Activated CD4-positive, alpha-beta T cell treated with anti-CD3 and anti-CD28 coated beads for 36 hours (primary cell): ENCODE measurements at regions of chr9 and their contacts with region 1.

Region 1: DNA sequence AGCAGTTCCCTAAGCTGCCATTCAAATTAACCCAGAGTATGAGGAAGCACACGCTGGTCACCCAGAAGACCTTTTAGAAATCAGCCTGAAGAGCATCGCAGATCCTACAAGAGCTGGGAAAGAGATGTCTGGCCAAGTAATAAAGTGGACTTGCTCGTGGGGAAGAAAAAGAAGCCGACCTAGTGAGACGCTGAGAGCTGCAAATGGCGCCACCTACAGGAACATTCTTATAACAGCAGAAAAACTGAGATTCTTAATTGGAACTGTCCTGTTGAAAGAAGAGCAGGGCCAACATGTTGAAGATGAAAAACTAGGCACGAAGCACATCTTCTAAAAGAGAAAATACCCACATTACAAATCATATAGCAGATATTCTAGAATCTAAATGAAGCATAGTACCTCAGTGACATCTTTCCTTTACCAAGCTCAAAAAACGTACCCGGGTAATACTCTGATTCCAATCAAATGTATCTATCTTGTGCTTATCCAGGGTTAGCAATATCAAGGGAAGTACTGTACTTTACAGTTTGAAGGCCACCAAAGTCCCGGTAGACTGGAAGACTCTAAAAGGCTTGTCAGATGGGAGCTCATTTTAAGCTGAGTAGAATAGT is 3.9 kb upstream of the GNAQ start:
- DNase-seq: peak; percentile 69
- ATAC-seq: peak; percentile 21
- H3K4me3 Mint-ChIP-seq: no peak overlapping the region
- H3K27ac Mint-ChIP-seq: no peak overlapping the region
- H3K4me1 Mint-ChIP-seq: peaks cover 30% of the 10 kb centered on the region
- H3K27me3 Mint-ChIP-seq: no peaks in the 10 kb centered on the region

Region 2: GRCh38 chr9:77177161-77177893 is 858.2 kb before region 1 on chr9 and contains the start of gene VPS13A:
- CTCF ChIA-PET with region 1: no interaction called
- POLR2A ChIA-PET with region 1: no interaction called
- intact Hi-C with region 1: loop called (anchors 1 to 5 kb)
- DNase-seq: peak; percentile 98
- ATAC-seq: peak; percentile 92
- H3K4me3 Mint-ChIP-seq: peak within 1 kb of the TSS; percentile 97
- H3K27ac Mint-ChIP-seq: peak within 1 kb of the TSS; percentile 93
- H3K4me1 Mint-ChIP-seq: peaks cover 23% of the 10 kb centered on the region
- H3K27me3 Mint-ChIP-seq: no peaks in the 10 kb centered on the region
- total RNA-seq, gene VPS13A: 33.3 to 33.6 TPM

Region 3: GRCh38 chr9:77648234-77649120 is 387.0 kb before region 1 on chr9 and contains the start of gene GNA14:
- CTCF ChIA-PET with region 1: no interaction called
- POLR2A ChIA-PET with region 1: no interaction called
- intact Hi-C with region 1: loop called in 1 of 2 experiments (anchors 5 kb)
- DNase-seq: peak; percentile 46
- ATAC-seq: peak; percentile 23
- H3K4me3 Mint-ChIP-seq: peak within 1 kb of the TSS; percentile 65
- H3K27ac Mint-ChIP-seq: no peak within 1 kb of the TSS
- H3K4me1 Mint-ChIP-seq: peaks cover 11% of the 10 kb centered on the region
- H3K27me3 Mint-ChIP-seq: peaks cover 38% of the 10 kb centered on the region
- total RNA-seq, gene GNA14: 0.11 to 0.54 TPM

Region 4: DNA sequence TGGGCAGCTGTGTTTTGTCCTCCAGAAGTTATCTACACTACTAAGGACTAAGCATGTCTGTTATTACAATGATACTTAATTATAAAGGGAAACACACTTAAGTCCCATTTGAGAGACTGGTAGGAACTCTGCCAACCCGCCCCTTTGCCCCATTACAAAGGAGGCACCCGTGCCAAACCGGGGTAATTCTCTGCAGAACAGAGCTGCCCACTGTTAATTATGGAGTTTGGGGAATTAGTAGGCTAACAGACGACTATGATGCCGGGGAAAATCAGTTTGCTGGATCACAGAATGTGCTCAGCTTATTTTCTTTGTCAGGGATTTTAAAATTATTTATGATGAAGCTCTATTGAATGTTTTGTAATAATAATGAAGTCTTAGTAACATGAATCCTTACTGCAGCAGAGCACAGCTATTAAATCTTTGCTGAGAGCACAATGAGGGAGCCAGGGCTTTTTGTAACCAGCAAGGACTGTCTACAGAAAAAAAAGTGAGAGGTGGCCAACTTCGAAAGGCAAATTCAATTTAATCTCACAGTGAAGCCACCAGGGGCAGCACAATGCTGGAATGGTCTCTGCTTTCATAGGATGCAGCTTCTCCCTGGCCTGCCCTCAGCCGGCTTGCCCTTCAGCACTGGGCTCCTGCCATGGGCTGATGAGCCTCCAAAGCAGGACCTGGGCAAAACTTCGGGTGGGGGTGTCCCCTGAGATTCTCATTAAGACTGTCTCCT is 138.4 kb before region 1 on chr9:
- CTCF ChIA-PET with region 1: interaction called, 13 read pairs
- POLR2A ChIA-PET with region 1: no interaction called
- intact Hi-C with region 1: loop called in 1 of 2 experiments (anchors 5 kb)
- DNase-seq: no peak
- ATAC-seq: no peak
- H3K4me3 Mint-ChIP-seq: no peak overlapping the region
- H3K27ac Mint-ChIP-seq: no peak overlapping the region
- H3K4me1 Mint-ChIP-seq: peaks cover 36% of the 10 kb centered on the region
- H3K27me3 Mint-ChIP-seq: no peaks in the 10 kb centered on the region

Region 5: DNA sequence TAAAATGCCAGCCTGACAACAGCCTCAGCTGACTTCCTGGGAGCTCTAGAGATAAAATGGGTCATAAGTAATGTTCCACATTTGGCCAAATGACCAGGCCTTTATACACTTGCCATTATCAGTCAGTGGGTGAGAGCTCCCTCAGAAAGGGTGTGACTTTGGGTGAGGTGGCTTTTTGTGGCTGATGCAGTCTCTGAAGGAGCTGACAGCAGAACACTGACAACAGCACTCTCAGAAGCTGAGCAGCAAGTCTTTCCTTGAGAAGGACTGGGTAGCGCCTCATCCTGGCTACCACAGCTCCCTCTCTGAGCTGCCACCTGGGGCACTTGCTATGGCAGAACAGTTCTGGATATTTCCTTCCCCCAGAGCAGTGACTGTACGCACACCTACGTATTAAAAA is 18.1 kb after region 1 on chr9:
- CTCF ChIA-PET with region 1: interaction called, 29 read pairs
- POLR2A ChIA-PET with region 1: interaction called, 4 read pairs
- intact Hi-C with region 1: no loop called
- DNase-seq: no peak
- ATAC-seq: peak; percentile 66
- H3K4me3 Mint-ChIP-seq: no peak overlapping the region
- H3K27ac Mint-ChIP-seq: no peak overlapping the region
- H3K4me1 Mint-ChIP-seq: peaks cover 17% of the 10 kb centered on the region
- H3K27me3 Mint-ChIP-seq: no peaks in the 10 kb centered on the region

Region 6: DNA sequence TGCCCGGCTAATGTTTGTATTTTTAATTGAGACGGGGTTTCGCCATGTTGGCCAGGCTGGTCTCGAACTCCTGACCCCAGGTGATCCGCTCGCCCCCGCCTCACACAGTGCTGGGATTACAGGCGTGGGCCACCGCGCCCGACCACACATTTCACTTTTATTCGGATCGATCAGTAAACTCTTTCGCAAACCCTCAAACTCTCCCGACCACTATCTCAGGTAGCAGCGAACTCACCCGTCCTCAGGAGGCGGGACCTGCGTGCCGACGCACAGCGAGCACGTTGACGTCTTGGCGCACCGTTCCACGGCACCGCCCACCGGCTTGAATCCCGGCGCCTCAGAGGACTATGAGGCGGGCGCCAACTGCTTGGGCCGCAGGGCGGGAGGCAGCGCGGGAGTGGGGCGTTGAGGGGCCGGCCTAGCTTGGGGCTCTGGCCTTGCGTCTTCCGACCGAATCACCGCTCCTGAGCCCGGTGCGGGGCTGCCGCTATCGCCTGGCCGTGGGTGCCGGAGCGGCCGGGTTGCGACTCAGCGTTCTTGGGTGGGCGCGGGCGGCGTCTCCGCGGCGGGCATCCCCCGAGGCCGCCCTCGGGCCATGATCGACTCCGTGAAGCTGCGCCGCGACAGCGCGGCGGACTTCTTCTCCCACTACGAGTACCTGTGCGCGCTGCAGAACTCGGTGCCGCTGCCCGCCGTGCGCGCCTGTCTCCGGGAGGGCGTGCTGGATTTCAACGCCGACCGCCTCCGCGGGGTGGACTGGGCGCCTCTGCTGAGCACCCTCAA is 200.5 kb after region 1 on chr9 and contains the start of gene CEP78:
- CTCF ChIA-PET with region 1: no interaction called
- POLR2A ChIA-PET with region 1: no interaction called
- intact Hi-C with region 1: loop called in 1 of 2 experiments (anchors 2 kb)
- DNase-seq: peak; percentile 94
- ATAC-seq: peak; percentile 98
- H3K4me3 Mint-ChIP-seq: no peak within 1 kb of the TSS
- H3K27ac Mint-ChIP-seq: peak within 1 kb of the TSS; percentile 93
- H3K4me1 Mint-ChIP-seq: peaks cover 30% of the 10 kb centered on the region
- H3K27me3 Mint-ChIP-seq: no peaks in the 10 kb centered on the region
- total RNA-seq, gene CEP78: 35.0 to 39.2 TPM